OCI-LY7 (cell line): ENCODE measurements at regions of chr18 and their contacts with region 1.

Region 1: DNA sequence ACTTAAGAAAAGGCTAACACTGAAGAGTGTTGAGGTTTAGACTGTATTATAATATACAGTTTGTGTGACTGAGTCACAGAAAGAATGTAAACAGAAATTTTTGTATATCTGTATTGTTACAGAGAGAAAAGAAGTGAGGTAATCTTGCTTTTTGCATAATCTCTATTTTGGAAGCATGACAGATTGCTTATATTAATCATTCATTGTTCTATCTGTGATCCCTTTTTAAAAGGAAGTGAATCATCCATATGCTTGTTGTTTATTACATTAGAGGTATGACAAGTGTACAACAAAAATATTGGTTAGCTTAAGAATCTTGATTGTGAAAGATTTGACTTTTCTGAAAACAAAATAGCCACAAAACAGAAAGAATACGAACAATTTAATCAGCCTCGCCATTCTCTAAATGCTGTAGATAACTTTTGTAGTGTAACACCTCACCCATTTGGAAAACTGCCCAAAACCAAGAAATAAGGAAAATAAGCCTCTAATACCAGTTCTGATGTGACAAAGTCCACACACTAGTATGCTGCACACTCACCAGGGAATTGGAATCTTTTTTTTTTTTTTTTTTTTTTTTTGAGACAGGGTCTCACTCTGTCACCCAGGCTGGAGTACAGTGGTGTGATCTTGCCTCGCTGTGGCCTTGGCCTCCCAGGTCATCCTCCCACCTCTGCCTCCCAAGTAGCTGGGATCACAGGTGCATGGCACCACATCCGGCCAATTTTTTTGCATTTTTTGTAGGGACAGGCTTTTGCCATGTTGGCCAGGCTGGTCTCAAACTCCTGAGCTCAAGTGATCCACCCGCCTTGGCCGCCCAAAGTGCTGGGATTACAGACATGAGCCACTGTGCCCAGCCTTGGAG is 91.5 kb upstream of the LPIN2 start:
- DNase-seq: no peak
- H3K4me3 ChIP-seq: no peak overlapping the region
- H3K27ac ChIP-seq: no peak overlapping the region
- H3K4me1 ChIP-seq: no peaks in the 10 kb centered on the region
- CTCF ChIP-seq: no peak

Region 2: GRCh38 chr18:3162181-3162580 is 57.8 kb after region 1 on chr18:
- CTCF ChIA-PET with region 1: no interaction called
- POLR2A ChIA-PET with region 1: no interaction called
- intact Hi-C with region 1: loop called (anchors 10 kb)
- DNase-seq: no peak
- H3K4me3 ChIP-seq: no peak overlapping the region
- H3K27ac ChIP-seq: no peak overlapping the region
- H3K4me1 ChIP-seq: no peaks in the 10 kb centered on the region
- CTCF ChIP-seq: no peak